ENCODE measurements at regions of chr4 and their contacts with region 1.

Region 1: DNA sequence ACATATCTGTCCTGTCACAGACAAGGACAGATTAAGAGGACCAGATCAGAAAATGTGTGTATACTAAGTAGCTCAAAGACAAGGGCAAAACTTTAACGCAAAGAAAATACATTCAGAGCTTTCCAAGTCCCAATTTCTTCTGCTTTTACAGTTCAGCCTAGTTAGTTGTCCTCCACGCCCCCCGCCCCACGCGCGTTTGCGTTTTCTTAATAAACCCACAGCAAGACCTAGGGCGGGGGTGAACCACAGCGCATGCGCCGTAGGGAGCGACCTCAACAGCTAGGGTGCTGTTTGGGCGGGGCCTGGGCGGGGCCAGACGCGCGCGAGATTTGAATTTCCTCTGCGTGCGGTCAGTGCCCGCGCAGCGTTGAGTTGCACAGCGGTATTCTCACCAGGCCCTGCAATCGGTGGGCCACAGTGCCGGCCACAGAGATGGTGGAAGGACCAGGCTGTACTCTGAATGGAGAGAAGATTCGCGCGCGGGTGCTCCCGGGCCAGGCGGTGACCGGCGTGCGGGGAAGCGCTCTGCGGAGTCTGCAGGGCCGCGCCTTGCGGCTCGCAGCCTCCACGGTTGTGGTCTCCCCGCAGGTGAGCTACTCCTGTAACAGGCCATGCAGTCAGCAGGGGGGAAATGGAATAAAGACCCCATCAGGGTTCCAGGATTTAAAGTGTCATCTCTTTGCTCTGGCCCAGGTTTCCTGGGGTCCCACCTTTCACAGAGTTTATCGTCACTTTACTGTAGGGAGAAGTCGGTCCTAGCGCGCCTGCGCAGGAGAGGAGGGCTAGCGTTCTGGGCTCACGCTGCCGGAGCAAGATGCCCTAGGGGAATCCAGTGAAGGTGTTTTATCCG is at the start of gene NEIL3:
- DNase-seq: peak; percentile 88
- H3K4me3 Mint-ChIP-seq: peak within 1 kb of the TSS; percentile 95
- H3K27ac Mint-ChIP-seq: peak within 1 kb of the TSS; percentile 91
- H3K4me1 Mint-ChIP-seq: peaks cover 51% of the 10 kb centered on the region
- H3K27me3 Mint-ChIP-seq: no peaks in the 10 kb centered on the region
- total RNA-seq, gene NEIL3: 18.2 and 18.5 TPM in 2 replicates

Region 2: GRCh38 chr4:176902710-176903323 is 406.9 kb before region 1 on chr4:
- intact Hi-C with region 1: loop called (anchors 5 kb)
- DNase-seq: no peak
- H3K4me3 Mint-ChIP-seq: no peak overlapping the region
- H3K27ac Mint-ChIP-seq: peak overlapping the region; percentile 55
- H3K4me1 Mint-ChIP-seq: peaks cover 15% of the 10 kb centered on the region
- H3K27me3 Mint-ChIP-seq: peaks cover 7% of the 10 kb centered on the region

Region 3: GRCh38 chr4:177190995-177191568 is 118.7 kb before region 1 on chr4:
- intact Hi-C with region 1: no loop called
- DNase-seq: no peak
- H3K4me3 Mint-ChIP-seq: no peak overlapping the region
- H3K27ac Mint-ChIP-seq: no peak overlapping the region
- H3K4me1 Mint-ChIP-seq: no peaks in the 10 kb centered on the region
- H3K27me3 Mint-ChIP-seq: no peaks in the 10 kb centered on the region

Region 4: GRCh38 chr4:177250056-177250696 is 59.6 kb before region 1 on chr4:
- intact Hi-C with region 1: loop called (anchors 1 kb)
- DNase-seq: peak; percentile 72
- H3K4me3 Mint-ChIP-seq: no peak overlapping the region
- H3K27ac Mint-ChIP-seq: no peak overlapping the region
- H3K4me1 Mint-ChIP-seq: peaks cover 21% of the 10 kb centered on the region
- H3K27me3 Mint-ChIP-seq: peaks cover 3% of the 10 kb centered on the region

Region 5: GRCh38 chr4:177339477-177340374 is 30.0 kb after region 1 on chr4:
- intact Hi-C with region 1: loop called (anchors 1 kb)
- DNase-seq: no peak
- H3K4me3 Mint-ChIP-seq: no peak overlapping the region
- H3K27ac Mint-ChIP-seq: peak overlapping the region; percentile 80
- H3K4me1 Mint-ChIP-seq: peaks cover 41% of the 10 kb centered on the region
- H3K27me3 Mint-ChIP-seq: no peaks in the 10 kb centered on the region

Region 6: GRCh38 chr4:177441803-177442622 is 132.3 kb after region 1 on chr4 and contains the start of gene AGA:
- intact Hi-C with region 1: loop called (anchors 1 kb)
- DNase-seq: peak; percentile 95
- H3K4me3 Mint-ChIP-seq: peak within 1 kb of the TSS; percentile 94
- H3K27ac Mint-ChIP-seq: peak within 1 kb of the TSS; percentile 97
- H3K4me1 Mint-ChIP-seq: peaks cover 31% of the 10 kb centered on the region
- H3K27me3 Mint-ChIP-seq: no peaks in the 10 kb centered on the region
- total RNA-seq, gene AGA: 19.5 and 21.0 TPM in 2 replicates

Measured in activated T-helper 2 cell treated with anti-CD3 and anti-CD28 coated beads, Interferon-gamma antibody, Interleukin-2, Interleukin-4, amounts not matched to agents 10 μg/mL and 5 μg/mL and 100 μg/mL, durations not matched to agents 14 hours and 24 hours and 36 hours (primary cell).